Natural killer cell (primary cell): ENCODE measurements at regions of chr10 and their contacts with region 1.

Region 1: DNA sequence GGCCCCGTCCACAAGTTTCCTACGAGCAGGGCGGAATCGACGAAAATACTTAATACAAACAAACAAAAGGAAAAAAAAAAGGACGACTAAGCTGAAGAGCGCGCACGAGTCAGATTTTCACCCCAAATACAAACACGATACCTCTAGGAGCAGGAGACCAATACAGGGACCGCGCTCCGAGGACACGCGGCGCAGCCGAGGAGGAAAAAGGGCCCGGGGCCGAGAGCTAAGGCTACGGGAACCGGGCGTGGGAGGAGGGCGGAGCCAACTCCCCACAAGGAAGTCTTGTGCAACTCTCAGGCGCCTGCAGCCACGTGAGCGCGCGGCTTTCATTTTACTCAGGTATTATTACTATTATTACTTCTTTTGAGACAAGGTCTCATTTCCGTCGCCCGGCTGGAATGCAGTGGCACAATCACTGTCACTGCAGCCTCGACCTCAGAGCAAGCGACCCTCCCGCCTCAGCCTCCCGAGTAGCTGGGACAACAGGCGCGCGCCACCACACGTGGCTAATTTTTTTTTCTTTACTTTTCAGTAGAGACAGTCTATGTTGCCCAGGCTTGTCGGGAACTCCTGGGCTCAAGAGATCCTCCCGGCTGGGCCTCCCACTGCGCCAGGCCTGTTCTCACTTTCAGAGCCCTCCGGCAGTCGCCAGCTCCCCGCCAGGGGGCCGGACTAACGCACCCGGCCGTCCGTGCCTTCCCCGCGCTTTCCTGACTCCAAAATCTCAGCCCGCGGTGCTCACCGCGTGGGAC is 1.2 kb downstream of the HNRNPF start:
- DNase-seq: peak; percentile 80 to 95
- ATAC-seq: peak; percentile 32 to 60 (median 39)
- H3K4me3 ChIP-seq: peak overlapping the region; percentile 96
- H3K4me3 Mint-ChIP-seq: peak overlapping the region; percentile 99
- H3K27ac ChIP-seq: peak overlapping the region; percentile 99
- H3K27ac Mint-ChIP-seq: peak overlapping the region; percentile 99
- H3K4me1 ChIP-seq: peaks cover 56% of the 10 kb centered on the region
- H3K4me1 Mint-ChIP-seq: peaks cover 42 to 47% of the 10 kb centered on the region in 2 donors
- H3K27me3 ChIP-seq: no peaks in the 10 kb centered on the region
- H3K27me3 Mint-ChIP-seq: no peaks in the 10 kb centered on the region
- CTCF ChIP-seq: no peak

Region 2: DNA sequence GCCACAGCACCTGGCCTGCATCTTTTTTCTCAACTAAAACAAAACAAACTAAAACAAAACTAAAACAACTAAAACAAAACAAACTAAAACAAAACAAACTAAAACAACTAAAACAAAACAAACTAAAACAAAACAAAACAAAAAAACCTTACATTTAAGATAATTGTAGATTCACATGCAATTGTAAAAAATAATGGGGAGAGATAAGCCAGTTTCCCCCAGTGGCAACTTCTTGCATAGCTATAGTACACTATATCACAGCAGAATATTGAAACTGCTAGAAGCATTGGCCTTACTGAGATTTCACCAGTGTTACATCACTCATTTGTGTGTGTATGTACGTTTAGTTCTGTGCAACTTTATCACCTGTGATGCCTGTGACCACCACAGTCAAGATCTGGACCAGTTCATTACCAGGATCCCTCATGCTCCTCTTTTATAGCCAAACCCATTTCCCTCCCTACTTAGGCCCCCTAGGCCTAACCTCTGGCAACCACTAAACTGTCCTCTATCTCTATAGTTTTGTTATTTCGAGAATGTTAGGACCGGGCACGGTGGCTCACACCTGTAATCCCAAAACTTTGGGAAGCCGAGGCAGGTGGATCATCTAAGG is 27.0 kb before region 1 on chr10:
- intact Hi-C with region 1: no loop called
- DNase-seq: no peak
- ATAC-seq: no peak
- H3K4me3 ChIP-seq: no peak overlapping the region
- H3K4me3 Mint-ChIP-seq: no peak overlapping the region
- H3K27ac ChIP-seq: no peak overlapping the region
- H3K27ac Mint-ChIP-seq: peak overlapping the region; percentile 24 to 31
- H3K4me1 ChIP-seq: no peaks in the 10 kb centered on the region
- H3K4me1 Mint-ChIP-seq: no peaks in the 10 kb centered on the region
- H3K27me3 ChIP-seq: no peaks in the 10 kb centered on the region
- H3K27me3 Mint-ChIP-seq: no peaks in the 10 kb centered on the region
- CTCF ChIP-seq: no peak

Region 3: GRCh38 chr10:43420369-43421200 is 12.8 kb after region 1 on chr10:
- intact Hi-C with region 1: loop called (anchors 2 kb)
- DNase-seq: peak; percentile 68 to 92
- ATAC-seq: peak; percentile 63 to 89 (median 81)
- H3K4me3 ChIP-seq: peak overlapping the region; percentile 77
- H3K4me3 Mint-ChIP-seq: peak overlapping the region; percentile 97
- H3K27ac ChIP-seq: peak overlapping the region; percentile 96
- H3K27ac Mint-ChIP-seq: peak overlapping the region; percentile 97
- H3K4me1 ChIP-seq: peaks cover 50% of the 10 kb centered on the region
- H3K4me1 Mint-ChIP-seq: peaks cover 35 to 41% of the 10 kb centered on the region in 2 donors
- H3K27me3 ChIP-seq: no peaks in the 10 kb centered on the region
- H3K27me3 Mint-ChIP-seq: no peaks in the 10 kb centered on the region
- CTCF ChIP-seq: no peak

Region 4: GRCh38 chr10:43436400-43437140 is 28.8 kb after region 1 on chr10 and contains the start of gene ZNF487:
- intact Hi-C with region 1: loop called (anchors 2 kb)
- DNase-seq: peak; percentile 88 to 93
- ATAC-seq: peak; percentile 90 to 98 (median 93)
- H3K4me3 ChIP-seq: peak within 1 kb of the TSS; percentile 86
- H3K4me3 Mint-ChIP-seq: peak within 1 kb of the TSS; percentile 98
- H3K27ac ChIP-seq: peak within 1 kb of the TSS; percentile 97
- H3K27ac Mint-ChIP-seq: peak within 1 kb of the TSS; percentile 98 to 99
- H3K4me1 ChIP-seq: peaks cover 25% of the 10 kb centered on the region
- H3K4me1 Mint-ChIP-seq: peaks cover 14 to 24% of the 10 kb centered on the region in 2 donors
- H3K27me3 ChIP-seq: no peaks in the 10 kb centered on the region
- H3K27me3 Mint-ChIP-seq: no peaks in the 10 kb centered on the region
- CTCF ChIP-seq: peak; percentile 7
- total RNA-seq, gene ZNF487: 19.1 to 30.8 (median 22.8) TPM